ENCODE measurements at regions of chr19 and their contacts with region 1.

Region 1: DNA sequence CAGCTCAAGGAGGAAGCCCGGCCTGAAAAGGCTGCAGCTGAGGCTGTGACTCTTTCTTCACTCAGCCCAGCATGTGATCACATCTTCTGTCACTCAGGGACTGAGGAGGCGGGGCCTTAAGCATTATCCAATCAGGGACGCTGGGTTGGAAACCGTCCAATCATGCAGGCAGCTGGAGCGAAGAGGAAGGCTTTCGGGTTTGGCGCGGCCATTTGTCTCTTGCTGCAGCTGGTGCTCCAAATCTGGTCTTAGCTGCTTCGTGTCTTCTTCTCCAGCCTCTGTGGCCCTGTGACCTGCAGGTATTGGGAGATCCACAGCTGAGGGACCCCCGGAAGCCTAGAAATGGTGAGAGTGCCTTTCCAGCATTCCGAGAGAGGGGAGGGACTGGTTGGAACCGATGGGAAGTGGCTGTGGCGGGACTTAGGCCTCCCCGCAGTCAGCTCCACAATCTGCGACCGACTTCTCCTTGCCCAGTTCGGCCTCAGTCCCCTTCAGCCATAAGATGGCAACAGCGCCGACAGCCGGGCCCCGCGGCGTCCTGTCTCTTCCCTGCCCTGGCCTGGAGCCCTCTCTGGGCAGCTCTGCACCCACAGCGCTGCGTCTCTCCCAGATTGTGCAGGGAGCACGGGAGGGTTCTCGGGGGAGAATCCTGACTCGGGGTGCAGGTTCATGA is at the start of gene ZNF90:
- DNase-seq: peak; percentile 87
- H3K4me3 Mint-ChIP-seq: peak within 1 kb of the TSS; percentile 87
- H3K27ac Mint-ChIP-seq: peak within 1 kb of the TSS; percentile 65
- H3K4me1 Mint-ChIP-seq: peaks cover 18% of the 10 kb centered on the region
- H3K27me3 Mint-ChIP-seq: no peaks in the 10 kb centered on the region
- total RNA-seq, gene ZNF90: 7.8 to 8.5 TPM

Region 2: GRCh38 chr19:20051841-20052768 is 25.8 kb before region 1 on chr19:
- CTCF ChIA-PET with region 1: interaction called, 3 read pairs
- POLR2A ChIA-PET with region 1: interaction called, 11 read pairs
- DNase-seq: peak; percentile 59
- H3K4me3 Mint-ChIP-seq: peak overlapping the region; percentile 86
- H3K27ac Mint-ChIP-seq: peak overlapping the region; percentile 68
- H3K4me1 Mint-ChIP-seq: peaks cover 9% of the 10 kb centered on the region
- H3K27me3 Mint-ChIP-seq: no peaks in the 10 kb centered on the region

Region 3: GRCh38 chr19:20124879-20125278 is 47.0 kb after region 1 on chr19:
- CTCF ChIA-PET with region 1: no interaction called
- POLR2A ChIA-PET with region 1: no interaction called
- DNase-seq: no peak
- H3K4me3 Mint-ChIP-seq: no peak overlapping the region
- H3K27ac Mint-ChIP-seq: no peak overlapping the region
- H3K4me1 Mint-ChIP-seq: no peaks in the 10 kb centered on the region
- H3K27me3 Mint-ChIP-seq: no peaks in the 10 kb centered on the region